Esophagus muscularis mucosa (tissue), 4 donors: ENCODE measurements at regions of chr16 and their contacts with region 1.

Region 1: DNA sequence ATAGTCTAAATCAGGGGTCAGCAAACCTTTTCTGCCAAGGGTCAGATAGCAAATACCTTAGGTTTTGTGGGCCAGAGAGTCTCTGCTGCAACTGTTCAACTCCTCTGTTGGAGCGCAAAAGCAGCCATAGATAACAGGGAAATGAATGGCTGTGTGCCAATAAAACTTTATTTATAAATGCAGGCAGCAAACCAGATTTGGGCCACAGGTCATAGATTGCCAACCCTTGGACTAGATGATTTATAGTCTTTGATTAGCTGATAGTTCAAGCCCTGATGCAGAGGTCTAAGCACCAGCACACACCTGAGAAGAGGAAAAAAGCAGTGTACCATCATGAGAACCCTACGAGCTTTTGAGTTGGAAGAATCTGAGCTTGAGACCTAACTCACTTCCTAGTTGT is 86.0 kb upstream of the DYNLRB2 start:
- DNase-seq: no peak
- H3K4me3 ChIP-seq: no peak overlapping the region
- H3K27ac ChIP-seq: no peak overlapping the region
- H3K4me1 ChIP-seq: no peaks in the 10 kb centered on the region
- H3K27me3 ChIP-seq: no peaks in the 10 kb centered on the region
- CTCF ChIP-seq: no peak
- EP300 ChIP-seq: no peak
- POLR2A ChIP-seq: no peak

Region 2: DNA sequence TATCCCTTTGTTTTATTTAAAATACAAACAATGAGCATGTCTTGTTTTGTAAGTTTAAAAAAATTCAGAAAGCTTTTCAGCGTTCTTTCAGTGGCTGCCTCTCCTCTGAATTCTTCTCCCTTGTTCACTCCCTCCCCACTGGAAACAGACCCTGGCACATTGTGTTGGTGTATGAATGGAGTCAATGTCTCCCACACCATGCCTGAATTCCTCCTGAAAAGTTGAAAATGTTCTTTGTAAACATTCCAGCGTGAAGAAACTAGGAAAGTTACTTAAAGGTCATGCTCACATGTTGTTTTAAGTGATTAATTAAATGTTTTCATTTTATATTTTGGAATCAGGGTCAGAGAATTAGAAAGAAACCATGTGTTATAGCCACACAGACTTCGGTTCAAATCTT is 50.9 kb before region 1 on chr16:
- intact Hi-C with region 1: loop called (anchors 5 kb)
- DNase-seq: no peak
- H3K4me3 ChIP-seq: no peak overlapping the region
- H3K27ac ChIP-seq: no peak overlapping the region
- H3K4me1 ChIP-seq: no peaks in the 10 kb centered on the region
- H3K27me3 ChIP-seq: no peaks in the 10 kb centered on the region
- CTCF ChIP-seq: no peak
- EP300 ChIP-seq: no peak
- POLR2A ChIP-seq: no peak